Mammary epithelial cell (primary cell): ENCODE measurements at regions of chr16 and their contacts with region 1.

Region 1: DNA sequence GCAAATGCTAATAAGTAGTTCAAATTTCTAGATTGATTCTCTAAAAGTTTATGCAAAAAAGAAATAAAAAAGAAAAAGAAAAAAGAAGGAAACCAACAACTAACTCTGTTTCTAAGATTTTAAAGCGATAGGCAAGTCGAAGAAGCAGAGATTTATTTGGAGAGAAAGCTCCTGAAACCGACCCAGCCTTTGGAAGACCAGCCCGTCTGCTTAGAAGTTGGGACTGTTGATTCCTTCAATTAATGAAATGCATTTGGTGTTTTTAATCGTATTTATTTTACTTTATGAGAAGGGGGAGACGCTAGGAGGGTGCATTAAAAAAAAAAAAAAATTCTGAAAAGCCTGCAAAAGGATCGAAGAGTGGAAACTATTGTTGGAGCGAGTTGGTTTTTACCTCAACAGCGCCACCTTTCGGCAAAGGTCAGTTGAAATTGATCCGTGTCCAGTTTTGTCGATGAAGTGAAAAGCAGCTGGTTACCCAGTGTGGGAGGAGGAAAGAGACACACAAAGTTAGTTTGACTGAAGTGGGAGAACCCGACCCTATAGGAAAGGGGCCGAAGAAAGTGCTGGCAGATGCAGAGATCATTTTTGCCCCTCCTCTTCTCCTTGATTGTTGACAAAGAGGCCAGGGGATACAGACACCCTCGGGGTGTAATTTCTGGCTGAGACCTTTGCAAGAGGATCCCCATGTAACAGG is 1.5 kb upstream of the MAF start:
- DNase-seq: peak; percentile 72
- H3K4me3 ChIP-seq: peak overlapping the region; percentile 87 to 94 (median 90)
- H3K27ac ChIP-seq: peak overlapping the region; percentile 56
- H3K4me1 ChIP-seq: peaks cover 29% of the 10 kb centered on the region
- H3K27me3 ChIP-seq: no peaks in the 10 kb centered on the region
- CTCF ChIP-seq: peak; percentile 73 to 75

Region 2: GRCh38 chr16:78099372-78100161 is 1502.5 kb before region 1 on chr16 and contains the start of gene WWOX:
- CTCF ChIA-PET with region 1: no interaction called
- dilution Hi-C with region 1: no loop called
- in situ Hi-C with region 1: loop called in 1 of 2 experiments (anchors 25 kb)
- intact Hi-C with region 1: no loop called
- DNase-seq: peak; percentile 99
- H3K4me3 ChIP-seq: peak within 1 kb of the TSS; percentile 72 to 97 (median 89)
- H3K27ac ChIP-seq: peak within 1 kb of the TSS; percentile 78
- H3K4me1 ChIP-seq: peaks cover 14% of the 10 kb centered on the region
- H3K27me3 ChIP-seq: no peaks in the 10 kb centered on the region
- CTCF ChIP-seq: peak; percentile 57 to 95
- total RNA-seq, gene WWOX: 11.0 TPM

Region 3: GRCh38 chr16:78705694-78706093 is 896.4 kb before region 1 on chr16:
- CTCF ChIA-PET with region 1: interaction called, 17 read pairs
- dilution Hi-C with region 1: no loop called
- in situ Hi-C with region 1: no loop called
- intact Hi-C with region 1: loop called (anchors 2 kb)
- DNase-seq: peak; percentile 66
- H3K4me3 ChIP-seq: no peak overlapping the region
- H3K27ac ChIP-seq: no peak overlapping the region
- H3K4me1 ChIP-seq: no peaks in the 10 kb centered on the region
- H3K27me3 ChIP-seq: no peaks in the 10 kb centered on the region
- CTCF ChIP-seq: peak; percentile 56

Region 4: DNA sequence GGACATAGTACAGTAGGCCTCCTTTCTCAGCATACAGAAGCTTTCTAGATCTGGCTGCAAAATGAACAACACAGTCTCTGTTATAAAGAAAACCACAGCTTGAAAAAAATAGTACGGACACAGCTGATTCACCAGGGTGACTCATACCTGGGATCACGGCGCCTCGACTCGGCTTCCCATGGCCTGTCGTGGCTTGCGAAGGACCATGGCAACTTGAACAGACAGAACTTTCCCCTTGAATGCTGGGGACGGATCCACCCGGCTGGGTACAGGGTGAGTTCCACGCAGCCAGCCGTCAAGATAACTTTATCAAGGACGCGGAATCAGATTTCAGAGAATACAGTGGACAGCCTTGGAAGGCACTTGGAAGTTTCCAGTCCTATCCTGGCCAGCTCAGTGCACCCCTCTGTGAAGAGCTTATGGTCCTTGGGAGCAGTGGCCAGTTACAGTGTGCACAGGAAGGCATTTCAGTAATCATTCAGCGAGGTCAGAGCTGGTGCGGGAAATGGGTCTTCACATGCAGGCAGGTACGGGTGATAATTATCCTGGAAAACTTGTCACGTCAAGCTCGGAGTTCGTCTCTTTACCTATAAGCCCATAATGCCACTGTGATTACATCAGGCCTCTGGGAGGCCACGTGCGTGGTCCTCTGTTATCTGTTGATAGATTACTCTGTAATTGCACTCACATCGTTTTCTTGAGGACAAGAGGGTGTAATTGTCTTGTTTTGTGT is 56.4 kb after region 1 on chr16:
- CTCF ChIA-PET with region 1: interaction called, 5 read pairs
- dilution Hi-C with region 1: no loop called
- in situ Hi-C with region 1: no loop called
- intact Hi-C with region 1: loop called (anchors 1 kb)
- DNase-seq: peak; percentile 97
- H3K4me3 ChIP-seq: peak overlapping the region in 1 of 3 experiments; percentile 14
- H3K27ac ChIP-seq: peak overlapping the region; percentile 87
- H3K4me1 ChIP-seq: peaks cover 39% of the 10 kb centered on the region
- H3K27me3 ChIP-seq: no peaks in the 10 kb centered on the region
- CTCF ChIP-seq: no peak

Region 5: GRCh38 chr16:79673635-79674034 is 71.6 kb after region 1 on chr16:
- CTCF ChIA-PET with region 1: no interaction called
- dilution Hi-C with region 1: no loop called
- in situ Hi-C with region 1: no loop called
- intact Hi-C with region 1: no loop called
- DNase-seq: no peak
- H3K4me3 ChIP-seq: no peak overlapping the region
- H3K27ac ChIP-seq: no peak overlapping the region
- H3K4me1 ChIP-seq: peaks cover 4% of the 10 kb centered on the region
- H3K27me3 ChIP-seq: no peaks in the 10 kb centered on the region
- CTCF ChIP-seq: no peak

Region 6: GRCh38 chr16:79885320-79885719 is 283.2 kb after region 1 on chr16:
- CTCF ChIA-PET with region 1: no interaction called
- dilution Hi-C with region 1: no loop called
- in situ Hi-C with region 1: no loop called
- intact Hi-C with region 1: loop called (anchors 1 kb)
- DNase-seq: peak; percentile 89
- H3K4me3 ChIP-seq: no peak overlapping the region
- H3K27ac ChIP-seq: peak overlapping the region; percentile 29
- H3K4me1 ChIP-seq: peaks cover 19% of the 10 kb centered on the region
- H3K27me3 ChIP-seq: no peaks in the 10 kb centered on the region
- CTCF ChIP-seq: peak; percentile 33 to 48

Region 7: DNA sequence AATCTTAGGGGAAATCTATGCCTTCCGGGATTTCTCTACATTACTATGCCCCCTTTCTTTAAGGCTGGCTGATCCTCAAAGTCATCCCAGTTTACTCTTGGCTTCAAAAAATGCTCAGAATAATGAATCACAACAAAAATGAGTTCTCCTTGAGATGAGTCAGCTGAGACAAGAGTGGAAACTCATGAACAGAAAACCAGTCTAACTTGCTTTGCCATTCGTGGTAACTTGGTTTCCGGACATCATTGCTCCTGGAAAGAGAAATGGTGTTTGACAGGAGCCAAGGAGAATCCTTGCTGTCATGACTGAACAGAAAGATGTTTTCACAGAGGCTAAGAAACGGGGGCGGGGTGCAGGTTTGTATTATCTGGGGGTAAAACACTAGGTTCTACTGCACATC is 503.1 kb after region 1 on chr16:
- CTCF ChIA-PET with region 1: no interaction called
- dilution Hi-C with region 1: no loop called
- in situ Hi-C with region 1: no loop called
- intact Hi-C with region 1: loop called (anchors 5 kb)
- DNase-seq: peak; percentile 96
- H3K4me3 ChIP-seq: no peak overlapping the region
- H3K27ac ChIP-seq: peak overlapping the region; percentile 85
- H3K4me1 ChIP-seq: peaks cover 38% of the 10 kb centered on the region
- H3K27me3 ChIP-seq: no peaks in the 10 kb centered on the region
- CTCF ChIP-seq: no peak